T-cell (primary cell): ENCODE measurements at regions of chr9 and their contacts with region 1.

Region 1: GRCh38 chr9:131407717-131408195 is 13.9 kb downstream of the PRRC2B start:
- DNase-seq: peak in 32 of 35 experiments; percentile 31 to 78 (median 52)
- ATAC-seq: peak; percentile 64 to 73 (median 68)
- H3K4me3 ChIP-seq: peak overlapping the region; percentile 38 to 62
- H3K4me3 Mint-ChIP-seq: peak overlapping the region; percentile 69 to 84 (median 78)
- H3K27ac ChIP-seq: peak overlapping the region; percentile 76
- H3K27ac Mint-ChIP-seq: peak overlapping the region; percentile 88 to 95
- H3K4me1 ChIP-seq: peaks cover 63 to 91% of the 10 kb centered on the region in 2 experiments
- H3K4me1 Mint-ChIP-seq: peaks cover 94 to 95% (median 95%) of the 10 kb centered on the region in 3 donors
- H3K27me3 ChIP-seq: no peaks in the 10 kb centered on the region
- H3K27me3 Mint-ChIP-seq: no peaks in the 10 kb centered on the region

Region 2: DNA sequence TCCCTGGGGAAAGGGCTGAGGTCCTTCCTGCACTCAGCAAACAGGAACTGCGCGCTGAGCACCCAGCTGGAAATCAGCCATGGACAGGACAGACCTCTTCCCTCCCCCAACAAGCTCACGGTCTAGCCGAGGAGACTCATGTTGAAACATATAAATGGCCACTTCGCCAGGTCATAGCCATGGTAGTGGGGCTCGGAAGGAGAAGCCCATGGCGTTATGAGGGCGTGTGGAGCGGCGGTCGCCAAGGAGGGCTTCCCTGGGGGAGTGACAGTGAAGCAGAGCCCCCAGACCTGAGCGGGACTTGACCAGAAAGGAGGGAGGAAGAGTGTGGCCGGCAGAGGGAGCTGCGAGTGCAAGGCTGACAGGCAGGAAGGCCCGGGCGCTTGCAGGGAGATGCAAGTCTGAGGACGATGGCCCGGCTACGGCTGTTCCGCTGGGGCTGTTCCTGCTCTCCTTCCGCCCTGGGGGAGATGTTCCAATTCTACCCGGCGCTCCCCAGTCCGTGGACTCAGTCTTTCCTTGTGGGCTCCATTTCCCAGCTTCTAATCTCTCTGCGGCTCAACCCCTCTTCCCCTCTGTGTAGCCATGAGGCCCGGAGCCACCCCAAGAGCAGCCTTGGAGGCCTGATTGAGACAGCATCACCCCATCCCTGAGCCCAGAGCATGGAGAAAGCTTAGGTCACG is 57.7 kb before region 1 on chr9:
- CTCF ChIA-PET with region 1: interaction called, 3 to 11 read pairs
- POLR2A ChIA-PET with region 1: no interaction called
- DNase-seq: peak; percentile 67 to 90 (median 84)
- ATAC-seq: peak; percentile 96 to 99 (median 98)
- H3K4me3 ChIP-seq: peak overlapping the region in 1 of 2 donors; percentile 5
- H3K4me3 Mint-ChIP-seq: no peak overlapping the region
- H3K27ac ChIP-seq: no peak overlapping the region
- H3K27ac Mint-ChIP-seq: peak overlapping the region in 1 of 2 donors; percentile 44
- H3K4me1 ChIP-seq: peaks cover 0 to 12% of the 10 kb centered on the region in 2 experiments
- H3K4me1 Mint-ChIP-seq: peaks cover 8 to 10% (median 8%) of the 10 kb centered on the region in 3 donors
- H3K27me3 ChIP-seq: peaks cover 0 to 28% of the 10 kb centered on the region in 2 experiments
- H3K27me3 Mint-ChIP-seq: peaks cover 0 to 7% of the 10 kb centered on the region in 2 donors